ENCODE measurements at regions of chr6 and their contacts with region 1.

Region 1: DNA sequence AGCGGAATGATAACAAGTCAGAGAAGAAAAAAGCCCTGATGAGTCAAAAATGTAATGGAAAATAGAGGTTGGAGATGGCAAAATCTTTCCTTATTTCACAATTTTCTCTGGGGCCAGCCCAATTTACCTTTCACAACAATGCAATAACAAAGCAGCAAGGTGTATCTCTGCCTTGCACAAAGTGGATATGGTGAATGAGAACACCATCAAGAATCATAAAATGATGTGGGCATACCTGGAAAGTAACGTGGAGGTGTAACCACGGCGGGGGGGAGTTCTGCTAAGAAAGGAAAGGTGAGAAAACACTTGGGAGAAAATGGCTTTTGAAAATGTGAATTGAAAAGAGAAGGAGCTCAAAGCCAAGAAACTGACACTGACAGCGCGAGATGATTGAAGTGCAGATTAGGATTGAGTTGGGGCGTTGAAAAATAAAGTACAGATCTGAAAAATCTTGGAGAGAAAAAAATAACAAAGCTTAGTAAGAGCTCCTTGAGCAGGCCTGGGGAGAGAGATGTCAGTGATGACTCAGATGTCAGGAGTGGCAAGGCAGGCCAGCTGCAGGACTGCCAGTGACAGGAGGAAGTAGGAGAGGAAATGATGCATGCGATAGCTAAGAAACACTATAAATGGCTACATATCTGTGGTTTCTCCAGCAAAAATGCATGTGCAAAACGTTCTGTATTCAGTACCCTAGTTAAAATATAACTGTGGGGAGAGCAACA is 26.2 kb downstream of the ARHGAP18 start:
- DNase-seq: peak; percentile 88
- ATAC-seq: peak; percentile 90
- H3K4me3 ChIP-seq: peak overlapping the region; percentile 30; the same call in 1 of the 2 replicates
- H3K27ac ChIP-seq: peak overlapping the region; percentile 93
- H3K4me1 ChIP-seq: peaks cover 48% of the 10 kb centered on the region
- H3K27me3 ChIP-seq: no peaks in the 10 kb centered on the region
- CTCF ChIP-seq: no peak
- EP300 ChIP-seq: peak; percentile 97 to 98
- POLR2A ChIP-seq: peak; percentile 38; the same call in 1 of the 2 replicates
- RAD21 ChIP-seq: peak; percentile 16; the same call in 1 of the 2 replicates

Region 2: DNA sequence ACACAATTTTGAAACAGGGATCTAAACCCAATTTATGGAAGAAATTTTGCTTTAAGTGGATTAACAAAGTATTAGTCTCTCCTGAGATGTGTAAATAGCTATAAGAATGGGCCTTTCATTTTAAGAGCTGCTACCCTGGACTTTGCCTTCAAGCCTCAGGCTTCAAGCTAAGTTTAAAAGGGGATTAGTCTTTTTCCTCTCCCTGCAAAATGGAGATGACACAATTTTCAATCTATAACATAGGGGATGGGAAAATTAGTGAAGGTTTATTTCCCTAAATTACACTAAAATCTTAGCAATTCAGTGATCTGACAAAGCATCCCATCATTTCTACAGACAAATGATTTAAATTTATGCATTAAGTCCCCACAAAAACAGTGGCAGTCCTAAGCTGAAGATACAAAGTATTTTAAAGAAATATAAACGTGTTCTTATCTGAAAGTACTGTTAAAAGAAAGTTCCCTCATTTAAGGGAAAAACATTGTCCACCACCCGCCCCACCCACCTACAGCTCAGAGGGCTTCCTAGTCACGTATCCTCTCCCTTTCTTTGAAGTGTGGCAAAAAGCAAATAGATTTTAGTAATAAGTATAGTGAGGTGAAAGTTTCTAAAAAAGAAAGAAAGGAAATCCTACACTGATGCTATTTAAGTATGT is 11.7 kb after region 1 on chr6:
- CTCF ChIA-PET with region 1: interaction called, 28 read pairs
- POLR2A ChIA-PET with region 1: interaction called, 73 read pairs
- RAD21 ChIA-PET with region 1: interaction called, 56 read pairs
- SMC1A ChIA-PET with region 1: interaction called, 93 read pairs
- in situ Hi-C with region 1: no loop called
- intact Hi-C with region 1: loop called (anchors 2 kb)
- DNase-seq: no peak
- ATAC-seq: peak; percentile 64
- H3K4me3 ChIP-seq: peak overlapping the region; percentile 48
- H3K27ac ChIP-seq: peak overlapping the region; percentile 60
- H3K4me1 ChIP-seq: peaks cover 64% of the 10 kb centered on the region
- H3K27me3 ChIP-seq: no peaks in the 10 kb centered on the region
- CTCF ChIP-seq: no peak
- EP300 ChIP-seq: no peak; a peak in 1 of 4 replicates
- POLR2A ChIP-seq: no peak
- RAD21 ChIP-seq: no peak

Measured in GM12878 (cell line).